ENCODE measurements at regions of chr1 and their contacts with region 1.

Region 1: GRCh38 chr1:203340112-203340804 is 10.7 kb downstream of the FMOD start:
- DNase-seq: no peak
- ATAC-seq: peak; percentile 94
- H3K4me3 ChIP-seq: no peak overlapping the region
- H3K27ac ChIP-seq: no peak overlapping the region
- H3K4me1 ChIP-seq: no peaks in the 10 kb centered on the region; the same call in 1 of the 2 replicates
- H3K27me3 ChIP-seq: peaks cover 37% of the 10 kb centered on the region
- CTCF ChIP-seq: peak; percentile 92

Region 2: DNA sequence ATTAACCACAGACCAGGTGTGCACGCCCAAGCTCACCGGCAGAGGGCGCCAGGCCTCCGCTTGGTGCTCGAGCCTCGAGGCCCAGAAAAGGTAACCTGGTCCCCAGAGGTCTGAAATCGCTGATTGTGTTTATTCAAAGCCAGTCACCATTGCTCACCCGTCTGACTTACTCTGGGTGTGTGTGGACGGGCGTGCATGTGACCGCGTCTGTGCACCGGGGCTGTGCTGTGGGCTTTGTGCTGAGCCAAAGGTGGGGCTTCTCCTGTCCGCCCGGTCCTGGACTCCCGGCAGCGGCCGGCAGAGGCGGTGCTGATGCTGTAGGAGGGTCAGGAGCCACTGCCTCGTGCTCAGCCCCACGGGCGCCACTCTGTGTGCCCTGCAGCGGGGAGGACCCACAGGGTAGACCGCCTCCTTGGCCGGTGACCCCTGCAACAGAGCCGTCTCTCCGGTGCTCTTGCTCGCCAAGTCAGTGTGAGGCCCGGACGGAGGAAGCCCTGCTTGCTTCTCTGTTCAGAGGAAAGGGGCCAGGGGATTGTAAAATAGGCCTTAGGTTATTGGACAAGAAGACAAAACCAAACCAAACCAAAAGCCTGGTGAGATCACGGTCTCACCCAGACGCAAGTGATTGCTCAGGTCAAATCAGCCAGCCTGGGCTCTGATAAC is 66.9 kb before region 1 on chr1:
- CTCF ChIA-PET with region 1: interaction called, 5 read pairs
- POLR2A ChIA-PET with region 1: no interaction called
- in situ Hi-C with region 1: no loop called
- intact Hi-C with region 1: loop called (anchors 1 kb)
- DNase-seq: peak; percentile 53
- ATAC-seq: peak; percentile 83
- H3K4me3 ChIP-seq: 0 out of 4 replicates have a peak overlapping the region, but pooled peaks of 1 of the 2 experiments have one; percentile 13
- H3K27ac ChIP-seq: no peak overlapping the region
- H3K4me1 ChIP-seq: peaks cover 6% of the 10 kb centered on the region
- H3K27me3 ChIP-seq: no peaks in the 10 kb centered on the region
- CTCF ChIP-seq: peak; percentile 98

Region 3: GRCh38 chr1:203359010-203359571 is 18.8 kb after region 1 on chr1:
- CTCF ChIA-PET with region 1: interaction called, 18 read pairs
- POLR2A ChIA-PET with region 1: no interaction called
- in situ Hi-C with region 1: no loop called
- intact Hi-C with region 1: no loop called
- DNase-seq: no peak
- ATAC-seq: no peak
- H3K4me3 ChIP-seq: no peak overlapping the region
- H3K27ac ChIP-seq: no peak overlapping the region
- H3K4me1 ChIP-seq: no peaks in the 10 kb centered on the region
- H3K27me3 ChIP-seq: peaks cover 28% of the 10 kb centered on the region
- CTCF ChIP-seq: no peak

Region 4: DNA sequence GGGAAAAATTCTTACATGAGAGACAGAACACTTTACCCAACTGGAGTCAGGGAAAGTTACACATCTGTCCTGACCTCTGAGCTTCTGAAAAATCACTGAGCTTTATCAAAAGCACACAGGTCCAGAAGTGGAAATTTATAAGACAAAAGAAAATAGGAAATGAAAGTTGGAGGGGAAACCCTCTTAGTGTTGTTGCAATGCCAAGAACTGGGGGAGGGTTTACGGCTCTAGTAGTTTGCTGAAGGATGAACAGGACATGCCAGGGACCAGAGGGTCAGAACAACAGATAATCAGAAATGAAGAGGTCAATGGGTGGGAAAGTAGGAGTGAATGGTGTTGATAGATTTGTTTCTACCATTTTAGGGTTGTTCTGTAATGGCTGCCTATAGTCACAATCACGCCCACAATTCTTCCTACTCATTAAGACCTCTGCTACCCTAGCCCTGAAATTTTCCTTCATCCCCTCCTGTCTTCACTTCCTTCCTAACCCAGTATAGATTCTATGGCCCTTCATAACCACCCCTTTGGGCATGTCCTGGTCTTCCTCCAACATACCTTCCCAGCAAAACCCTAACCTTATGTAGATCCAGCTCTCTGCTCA is 41.0 kb after region 1 on chr1:
- CTCF ChIA-PET with region 1: no interaction called
- POLR2A ChIA-PET with region 1: no interaction called
- in situ Hi-C with region 1: no loop called
- intact Hi-C with region 1: no loop called
- DNase-seq: no peak
- ATAC-seq: no peak
- H3K4me3 ChIP-seq: no peak overlapping the region
- H3K27ac ChIP-seq: no peak overlapping the region
- H3K4me1 ChIP-seq: no peaks in the 10 kb centered on the region
- H3K27me3 ChIP-seq: peaks cover 16% of the 10 kb centered on the region
- CTCF ChIP-seq: no peak

Region 5: GRCh38 chr1:203440771-203441170 is 100.5 kb after region 1 on chr1:
- CTCF ChIA-PET with region 1: interaction called, 4 read pairs
- POLR2A ChIA-PET with region 1: no interaction called
- in situ Hi-C with region 1: no loop called
- intact Hi-C with region 1: loop called (anchors 5 kb)
- DNase-seq: no peak
- ATAC-seq: peak; percentile 84
- H3K4me3 ChIP-seq: no peak overlapping the region
- H3K27ac ChIP-seq: no peak overlapping the region
- H3K4me1 ChIP-seq: no peaks in the 10 kb centered on the region
- H3K27me3 ChIP-seq: peaks cover 25% of the 10 kb centered on the region
- CTCF ChIP-seq: peak; percentile 43; the same call in 1 of the 2 replicates

Region 6: GRCh38 chr1:203486618-203487370 is 146.5 kb after region 1 on chr1:
- CTCF ChIA-PET with region 1: interaction called, 11 read pairs
- POLR2A ChIA-PET with region 1: no interaction called
- in situ Hi-C with region 1: no loop called
- intact Hi-C with region 1: loop called (anchors 1 kb)
- DNase-seq: no peak
- ATAC-seq: 0 out of 2 replicates have a peak, but pooled peaks have one; percentile 5
- H3K4me3 ChIP-seq: no peak overlapping the region
- H3K27ac ChIP-seq: no peak overlapping the region
- H3K4me1 ChIP-seq: no peaks in the 10 kb centered on the region
- H3K27me3 ChIP-seq: peaks cover 6% of the 10 kb centered on the region
- CTCF ChIP-seq: no peak

Region 7: DNA sequence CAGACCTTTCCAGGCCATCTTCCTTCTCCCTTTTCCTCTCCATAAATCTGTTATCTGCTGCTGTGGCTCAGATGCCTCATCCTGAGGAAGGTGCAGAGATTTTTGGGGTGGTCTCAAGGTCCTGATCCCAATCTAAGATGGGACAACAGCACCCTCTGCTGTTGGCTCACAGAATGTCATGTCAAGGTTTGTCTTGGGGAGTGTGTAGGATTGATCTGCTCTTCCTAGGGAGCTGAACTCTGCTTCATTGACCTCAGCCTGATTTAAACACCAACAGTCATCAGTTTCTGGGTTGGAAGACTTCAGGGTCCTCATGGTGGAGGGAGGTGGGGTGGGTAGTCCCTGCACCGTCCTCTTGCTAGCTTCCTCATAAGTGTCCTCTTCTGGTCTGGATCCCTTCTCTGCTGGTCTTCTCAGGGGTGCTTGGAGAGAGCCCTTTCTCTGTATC is 361.9 kb after region 1 on chr1:
- CTCF ChIA-PET with region 1: interaction called, 4 read pairs
- POLR2A ChIA-PET with region 1: no interaction called
- in situ Hi-C with region 1: no loop called
- intact Hi-C with region 1: loop called (anchors 5 kb)
- DNase-seq: peak; percentile 52
- ATAC-seq: peak; percentile 86
- H3K4me3 ChIP-seq: no peak overlapping the region
- H3K27ac ChIP-seq: no peak overlapping the region
- H3K4me1 ChIP-seq: no peaks in the 10 kb centered on the region
- H3K27me3 ChIP-seq: no peaks in the 10 kb centered on the region
- CTCF ChIP-seq: peak; percentile 84

Region 8: DNA sequence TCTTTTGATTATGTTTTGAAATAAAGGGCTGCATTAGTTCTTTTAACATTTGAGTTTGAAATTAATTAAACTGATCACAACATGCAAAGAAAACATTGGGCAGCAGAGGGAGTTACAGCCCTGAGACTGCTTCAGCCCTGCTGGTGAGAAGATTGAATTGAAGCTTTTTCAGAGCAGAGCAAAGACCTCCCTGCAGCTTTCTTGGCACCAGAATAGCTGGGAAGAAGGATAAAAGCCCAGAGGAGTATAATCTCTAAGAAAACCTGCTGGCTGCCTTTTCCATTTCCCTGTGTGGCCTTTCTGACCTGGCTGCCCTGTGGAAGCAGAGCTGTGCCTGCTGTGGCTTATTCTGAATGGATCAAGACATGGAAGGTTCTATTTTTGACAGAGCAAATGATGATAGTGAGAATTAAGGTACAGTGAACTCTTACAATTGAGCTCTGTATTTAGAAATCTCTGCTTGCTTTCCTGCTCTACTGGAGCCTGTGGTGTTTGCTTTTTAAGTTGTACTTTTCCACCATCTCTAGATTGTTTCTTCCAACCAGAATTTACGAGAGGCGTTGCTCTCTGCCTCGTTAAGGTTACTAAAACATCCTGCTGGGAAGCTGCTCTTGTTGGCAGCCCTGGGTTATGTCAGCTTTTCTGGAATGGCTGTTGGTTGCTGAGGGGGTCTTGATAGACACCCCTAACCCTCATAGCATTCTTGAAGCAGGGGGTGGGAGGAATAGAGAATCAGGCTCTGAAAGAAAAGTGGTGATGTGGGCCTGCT is 531.0 kb after region 1 on chr1:
- CTCF ChIA-PET with region 1: no interaction called
- POLR2A ChIA-PET with region 1: no interaction called
- in situ Hi-C with region 1: no loop called
- intact Hi-C with region 1: no loop called
- DNase-seq: no peak
- ATAC-seq: peak; percentile 85
- H3K4me3 ChIP-seq: no peak overlapping the region
- H3K27ac ChIP-seq: peak overlapping the region; percentile 66
- H3K4me1 ChIP-seq: peaks cover 18% of the 10 kb centered on the region
- H3K27me3 ChIP-seq: no peaks in the 10 kb centered on the region
- CTCF ChIP-seq: peak; percentile 84

Measured in Panc1 (cell line).